Activated CD8-positive, alpha-beta memory T cell treated with anti-CD3 and anti-CD28 coated beads, Interleukin-2, amount 10 ng/mL, durations not matched to agents 7 days and 5 days (primary cell): ENCODE measurements at regions of chr5 and their contacts with region 1.

Region 1: GRCh38 chr5:54905943-54906537 is 79.4 kb downstream of the ESM1 start:
- DNase-seq: peak; percentile 85
- ATAC-seq: no peak
- H3K4me3 Mint-ChIP-seq: no peak overlapping the region
- H3K27ac Mint-ChIP-seq: no peak overlapping the region
- H3K4me1 Mint-ChIP-seq: peaks cover 66% of the 10 kb centered on the region
- H3K27me3 Mint-ChIP-seq: peaks cover 26% of the 10 kb centered on the region

Region 2: GRCh38 chr5:54673523-54674225 is 232.4 kb before region 1 on chr5:
- CTCF ChIA-PET with region 1: no interaction called
- DNase-seq: peak; percentile 88
- ATAC-seq: peak; percentile 95
- H3K4me3 Mint-ChIP-seq: no peak overlapping the region
- H3K27ac Mint-ChIP-seq: peak overlapping the region; percentile 75
- H3K4me1 Mint-ChIP-seq: peaks cover 68% of the 10 kb centered on the region
- H3K27me3 Mint-ChIP-seq: no peaks in the 10 kb centered on the region

Region 3: DNA sequence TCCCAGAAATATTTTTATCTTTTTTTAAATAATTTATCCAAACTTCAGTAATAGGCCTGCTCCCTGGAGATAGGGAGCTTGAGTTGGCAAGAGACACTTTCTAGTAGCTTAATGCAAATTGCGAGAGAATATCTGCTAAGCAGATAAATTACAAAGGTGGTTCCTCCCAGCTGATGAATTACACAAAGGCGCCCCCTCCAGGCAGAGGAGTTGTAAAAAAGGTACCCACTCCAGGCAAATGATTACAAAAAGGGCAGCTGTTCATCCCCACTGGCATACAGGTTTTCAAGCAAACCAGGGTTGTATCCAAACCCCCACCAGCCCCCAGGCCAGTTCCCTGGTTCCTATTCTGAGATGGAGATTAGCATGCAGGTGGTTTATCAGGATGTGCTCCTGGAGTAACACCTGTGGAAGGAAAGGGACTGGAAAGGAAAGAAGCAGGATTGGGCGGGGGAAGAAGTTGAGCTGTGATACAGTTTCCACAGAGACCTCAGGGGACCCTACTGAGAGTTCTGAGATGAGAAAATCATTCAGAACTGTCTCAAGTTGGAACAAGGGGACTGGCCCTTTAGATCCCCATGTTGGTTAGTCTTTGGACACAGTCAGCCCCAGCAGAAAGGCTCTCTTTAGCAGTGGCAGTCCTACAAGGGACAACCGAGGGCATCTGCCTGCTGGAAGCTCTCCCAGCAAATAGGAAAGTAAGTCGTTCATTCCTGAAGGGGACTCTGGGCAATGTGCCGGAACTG is 53.8 kb after region 1 on chr5:
- CTCF ChIA-PET with region 1: interaction called, 10 read pairs
- DNase-seq: peak; percentile 57
- ATAC-seq: no peak
- H3K4me3 Mint-ChIP-seq: no peak overlapping the region
- H3K27ac Mint-ChIP-seq: no peak overlapping the region
- H3K4me1 Mint-ChIP-seq: peaks cover 2% of the 10 kb centered on the region
- H3K27me3 Mint-ChIP-seq: peaks cover 3% of the 10 kb centered on the region

Region 4: DNA sequence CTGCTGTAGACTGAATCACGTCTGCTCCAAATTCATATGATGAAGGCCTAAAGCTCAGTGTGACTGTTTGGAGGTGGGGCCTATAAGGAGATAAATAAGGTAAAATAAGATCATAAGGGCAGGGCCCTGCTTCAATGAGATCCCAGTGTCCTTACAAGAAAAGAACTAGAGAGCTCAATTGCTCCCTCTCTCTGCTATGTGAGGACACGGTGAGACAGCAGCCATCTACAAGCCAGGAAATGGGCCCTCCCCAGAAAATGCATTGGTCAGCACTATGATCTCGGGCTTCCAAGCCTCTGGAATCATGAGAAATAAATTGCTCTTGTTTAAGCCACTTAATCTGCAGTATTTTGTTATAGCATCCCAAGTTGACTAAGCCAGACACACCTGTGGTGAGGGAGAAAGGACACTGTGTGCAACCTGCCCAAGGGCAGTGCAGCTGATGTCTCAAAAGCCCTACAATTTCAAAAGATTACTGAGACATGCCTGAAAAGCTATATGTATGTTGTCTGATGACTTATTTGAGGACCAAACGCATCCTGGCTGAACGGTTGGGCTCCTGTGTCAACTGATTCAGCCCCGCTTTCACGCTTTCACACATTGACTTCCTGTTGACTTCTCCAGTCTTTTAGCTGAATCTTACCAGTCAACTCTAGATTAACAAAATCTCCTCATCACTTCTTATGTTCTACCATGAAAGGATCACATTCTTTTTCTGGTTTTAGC is 131.2 kb after region 1 on chr5:
- CTCF ChIA-PET with region 1: interaction called, 10 read pairs
- DNase-seq: peak; percentile 93
- ATAC-seq: peak; percentile 96
- H3K4me3 Mint-ChIP-seq: peak overlapping the region; percentile 14
- H3K27ac Mint-ChIP-seq: peak overlapping the region; percentile 97
- H3K4me1 Mint-ChIP-seq: peaks cover 55% of the 10 kb centered on the region
- H3K27me3 Mint-ChIP-seq: no peaks in the 10 kb centered on the region

Region 5: GRCh38 chr5:55146543-55147151 is 240.6 kb after region 1 on chr5:
- CTCF ChIA-PET with region 1: interaction called, 74 read pairs
- DNase-seq: peak; percentile 92
- ATAC-seq: peak; percentile 91
- H3K4me3 Mint-ChIP-seq: peak overlapping the region; percentile 38
- H3K27ac Mint-ChIP-seq: peak overlapping the region; percentile 75
- H3K4me1 Mint-ChIP-seq: peaks cover 43% of the 10 kb centered on the region
- H3K27me3 Mint-ChIP-seq: peaks cover 9% of the 10 kb centered on the region

Region 6: DNA sequence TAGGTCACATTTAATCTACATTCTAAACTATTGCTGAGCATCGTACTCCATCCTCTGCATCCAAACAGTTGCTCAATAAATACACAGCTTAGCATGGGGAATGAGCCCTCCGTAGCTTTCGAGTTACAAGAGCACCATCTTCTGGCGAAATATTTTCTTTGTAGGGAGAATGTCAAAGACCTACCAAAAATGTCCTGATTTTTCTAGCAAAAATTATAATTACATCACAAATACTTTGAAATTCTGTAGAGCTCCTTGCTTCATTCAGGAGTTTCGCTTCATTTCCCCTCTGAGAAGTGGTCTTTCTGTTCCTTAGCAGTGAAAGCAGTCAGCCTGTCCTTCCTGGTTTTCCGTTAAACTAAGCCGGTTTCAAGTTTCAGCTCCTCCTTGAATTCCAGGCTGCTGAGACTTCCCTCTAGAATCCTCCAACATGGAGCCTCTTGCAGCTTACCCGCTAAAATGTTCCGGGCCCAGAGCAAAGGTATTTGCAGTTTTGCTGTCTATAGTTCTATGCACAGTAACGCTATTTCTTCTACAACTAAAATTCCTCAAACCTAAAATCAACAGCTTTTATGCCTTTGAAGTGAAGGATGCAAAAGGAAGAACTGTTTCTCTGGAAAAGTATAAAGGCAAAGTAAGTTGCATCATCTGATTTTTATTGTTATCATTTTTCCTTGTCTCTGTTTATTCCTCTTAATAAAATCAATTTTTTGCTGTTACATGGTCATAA is 253.9 kb after region 1 on chr5 and contains the start of gene GPX8:
- CTCF ChIA-PET with region 1: interaction called, 143 read pairs
- DNase-seq: no peak
- ATAC-seq: peak; percentile 76
- H3K4me3 Mint-ChIP-seq: no peak within 1 kb of the TSS
- H3K27ac Mint-ChIP-seq: no peak within 1 kb of the TSS
- H3K4me1 Mint-ChIP-seq: peaks cover 4% of the 10 kb centered on the region
- H3K27me3 Mint-ChIP-seq: peaks cover 45% of the 10 kb centered on the region
- total RNA-seq, gene GPX8: not detected